ENCODE measurements at regions of chr1 and their contacts with region 1.

Region 1: GRCh38 chr1:167599957-167600581 is 30.0 kb upstream of the RCSD1 start:
- DNase-seq: peak; percentile 64 to 79 (median 79)
- H3K4me3 ChIP-seq: peak overlapping the region in 1 of 7 experiments; percentile 29
- H3K27ac ChIP-seq: no peak overlapping the region
- H3K4me1 ChIP-seq: peaks cover 24 to 34% (median 33%) of the 10 kb centered on the region in 4 experiments
- H3K27me3 ChIP-seq: no peaks in the 10 kb centered on the region

Region 2: GRCh38 chr1:167148421-167148820 is 451.6 kb before region 1 on chr1:
- CTCF ChIA-PET with region 1: no interaction called
- POLR2A ChIA-PET with region 1: no interaction called
- DNase-seq: no peak
- H3K4me3 ChIP-seq: no peak overlapping the region
- H3K27ac ChIP-seq: no peak overlapping the region
- H3K4me1 ChIP-seq: peaks cover 0 to 27% (median 6%) of the 10 kb centered on the region in 4 experiments
- H3K27me3 ChIP-seq: no peaks in the 10 kb centered on the region

Region 3: DNA sequence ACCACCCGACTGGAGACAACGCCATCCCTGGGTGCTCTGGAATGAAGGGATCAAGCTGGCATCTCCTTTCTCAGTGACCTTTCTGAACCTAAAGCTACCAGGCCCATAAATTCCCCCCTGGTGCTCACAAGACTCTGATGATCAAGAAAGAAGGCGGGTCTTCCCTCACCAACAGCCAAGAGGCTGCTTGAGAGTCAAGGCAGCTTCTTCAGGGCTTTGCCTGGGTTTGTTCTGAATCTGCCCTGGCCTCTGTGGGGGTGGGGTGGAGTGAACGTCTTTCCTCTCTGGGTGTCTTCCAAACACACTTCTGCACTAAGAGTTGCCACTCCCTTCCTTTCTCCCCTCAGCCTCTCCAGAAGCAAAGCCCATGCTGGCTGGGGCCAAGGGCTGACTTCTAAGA is 117.9 kb before region 1 on chr1:
- CTCF ChIA-PET with region 1: no interaction called
- POLR2A ChIA-PET with region 1: no interaction called
- DNase-seq: no peak
- H3K4me3 ChIP-seq: no peak overlapping the region
- H3K27ac ChIP-seq: no peak overlapping the region
- H3K4me1 ChIP-seq: peaks cover 0 to 8% (median 2%) of the 10 kb centered on the region in 4 experiments
- H3K27me3 ChIP-seq: no peaks in the 10 kb centered on the region

Region 4: GRCh38 chr1:167517535-167518330 is 82.3 kb before region 1 on chr1:
- CTCF ChIA-PET with region 1: no interaction called
- POLR2A ChIA-PET with region 1: no interaction called
- DNase-seq: no peak
- H3K4me3 ChIP-seq: no peak overlapping the region
- H3K27ac ChIP-seq: no peak overlapping the region
- H3K4me1 ChIP-seq: peaks cover 0 to 3% (median 0%) of the 10 kb centered on the region in 4 experiments
- H3K27me3 ChIP-seq: no peaks in the 10 kb centered on the region

Region 5: GRCh38 chr1:167563579-167564246 is 36.4 kb before region 1 on chr1:
- CTCF ChIA-PET with region 1: no interaction called
- POLR2A ChIA-PET with region 1: no interaction called
- DNase-seq: no peak
- H3K4me3 ChIP-seq: no peak overlapping the region
- H3K27ac ChIP-seq: no peak overlapping the region
- H3K4me1 ChIP-seq: peaks cover 0 to 16% (median 3%) of the 10 kb centered on the region in 4 experiments
- H3K27me3 ChIP-seq: no peaks in the 10 kb centered on the region

Region 6: DNA sequence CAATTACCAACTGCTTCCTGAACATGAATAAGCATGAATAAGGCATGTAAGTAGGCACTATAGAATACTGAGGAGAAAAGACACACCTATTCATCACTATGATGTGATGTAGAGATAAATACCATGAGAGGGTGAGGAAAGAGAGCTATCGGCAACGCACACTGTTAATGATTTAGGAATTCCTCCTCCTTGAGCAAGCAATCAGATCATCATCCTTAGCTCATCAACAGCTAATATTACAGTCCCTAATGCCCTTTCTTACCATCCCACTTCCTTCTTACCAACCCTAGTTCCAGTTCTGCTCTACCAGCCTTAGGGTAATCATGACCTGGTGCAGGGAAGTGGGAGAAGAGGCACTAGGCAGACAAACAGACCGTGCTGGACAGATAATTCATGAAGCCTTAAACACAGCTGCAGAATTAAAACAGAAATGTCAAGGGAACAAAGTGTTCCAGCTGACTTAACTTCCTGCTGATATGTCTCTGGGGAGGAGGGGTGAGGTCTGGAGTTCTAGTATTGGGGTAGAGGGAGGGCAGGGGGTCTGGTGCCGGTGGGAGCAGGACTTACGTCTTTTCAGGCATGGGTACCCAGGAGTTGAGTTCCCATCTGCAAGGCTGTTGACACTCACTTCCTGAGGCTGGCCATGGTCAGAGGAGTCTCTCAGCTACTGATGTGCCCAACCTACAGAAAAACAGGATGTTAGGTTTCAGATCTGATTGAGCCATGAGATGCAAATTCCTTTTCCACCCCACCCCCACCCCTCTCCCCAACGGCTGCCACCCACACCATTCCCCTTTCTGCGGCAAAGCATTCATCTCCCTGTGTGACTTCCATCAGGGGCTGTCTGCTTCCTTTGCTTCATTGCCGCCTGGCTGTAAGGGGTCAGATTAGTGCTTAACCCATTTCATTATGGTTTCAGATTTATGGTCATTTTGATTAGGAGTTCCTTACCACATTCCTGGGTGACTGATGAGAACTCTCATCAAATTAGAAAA is 17.4 kb after region 1 on chr1:
- CTCF ChIA-PET with region 1: interaction called, 18 read pairs
- POLR2A ChIA-PET with region 1: interaction called, 5 read pairs
- DNase-seq: peak; percentile 56 to 83 (median 74)
- H3K4me3 ChIP-seq: peak overlapping the region in 6 of 7 experiments; percentile 37 to 67 (median 50)
- H3K27ac ChIP-seq: peak overlapping the region; percentile 33 to 70
- H3K4me1 ChIP-seq: peaks cover 25 to 44% (median 34%) of the 10 kb centered on the region in 4 experiments
- H3K27me3 ChIP-seq: no peaks in the 10 kb centered on the region

Region 7: DNA sequence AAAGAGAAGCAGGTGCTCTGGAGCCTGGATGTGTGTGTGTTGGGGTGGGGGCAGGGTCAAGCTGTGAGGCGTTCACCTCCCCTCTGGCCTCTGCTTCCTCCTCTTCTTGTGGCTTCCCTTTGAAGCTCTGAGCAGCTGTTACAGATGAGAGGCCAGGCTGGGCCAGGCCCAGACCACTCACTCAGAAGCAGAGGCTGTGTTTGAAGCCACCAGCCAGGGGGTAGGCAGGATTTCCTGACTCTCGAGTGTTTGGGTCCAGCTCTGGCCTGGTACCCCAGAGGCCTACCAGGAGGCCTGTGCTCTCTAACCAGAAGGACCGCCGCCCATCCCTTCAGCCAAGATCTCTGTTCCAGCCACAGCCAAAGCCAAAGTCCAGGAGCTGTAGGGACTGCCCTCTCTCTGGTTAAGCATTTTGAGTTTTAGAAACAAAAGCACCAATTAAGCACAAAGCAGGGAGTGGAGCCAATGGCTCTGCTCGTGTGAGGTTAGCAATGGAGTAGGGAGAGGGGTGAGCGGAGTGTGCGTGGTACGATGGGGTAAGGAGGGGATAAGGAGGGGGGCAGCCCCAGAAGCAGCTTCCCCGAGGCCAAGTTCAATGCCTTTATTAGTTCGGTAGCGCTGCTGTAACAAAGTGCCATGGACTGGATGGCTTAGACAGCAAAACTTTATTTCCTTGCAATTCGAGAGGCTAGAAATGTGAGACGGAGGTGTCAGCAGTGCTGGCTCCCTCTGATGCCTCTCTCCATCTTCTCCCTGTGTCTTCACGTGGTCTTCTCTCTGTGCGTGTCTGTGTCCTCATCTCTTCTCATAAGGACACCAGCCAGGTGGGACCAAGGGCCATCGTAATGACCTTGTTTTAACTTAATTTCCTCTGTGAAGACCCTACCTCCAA is 50.4 kb after region 1 on chr1:
- CTCF ChIA-PET with region 1: interaction called, 156 read pairs
- POLR2A ChIA-PET with region 1: interaction called, 3 read pairs
- DNase-seq: peak in 2 of 3 donors; percentile 81 to 86
- H3K4me3 ChIP-seq: peak overlapping the region in 2 of 7 experiments; percentile 14 to 29
- H3K27ac ChIP-seq: peak overlapping the region; percentile 68 to 77
- H3K4me1 ChIP-seq: peaks cover 49 to 94% (median 82%) of the 10 kb centered on the region in 4 experiments
- H3K27me3 ChIP-seq: no peaks in the 10 kb centered on the region

Region 8: GRCh38 chr1:167681451-167682098 is 81.5 kb after region 1 on chr1:
- CTCF ChIA-PET with region 1: interaction called, 84 read pairs
- POLR2A ChIA-PET with region 1: interaction called, 3 read pairs
- DNase-seq: no peak
- H3K4me3 ChIP-seq: no peak overlapping the region
- H3K27ac ChIP-seq: peak overlapping the region in 1 of 2 experiments; percentile 4
- H3K4me1 ChIP-seq: peaks cover 3 to 7% (median 4%) of the 10 kb centered on the region in 4 experiments
- H3K27me3 ChIP-seq: no peaks in the 10 kb centered on the region

Measured in common myeloid progenitor, CD34-positive (primary cell).